Motor neuron (in vitro differentiated cells): ENCODE measurements at regions of chr11 and their contacts with region 1.

Region 1: GRCh38 chr11:36265793-36266628 is 23.2 kb downstream of the COMMD9 start:
- ATAC-seq: peak; percentile 71 to 93 (median 88)
- H3K4me3 ChIP-seq: no peak overlapping the region
- H3K27ac ChIP-seq: no peak overlapping the region
- H3K4me1 ChIP-seq: peaks cover 9 to 11% of the 10 kb centered on the region in 2 donors

Region 2: DNA sequence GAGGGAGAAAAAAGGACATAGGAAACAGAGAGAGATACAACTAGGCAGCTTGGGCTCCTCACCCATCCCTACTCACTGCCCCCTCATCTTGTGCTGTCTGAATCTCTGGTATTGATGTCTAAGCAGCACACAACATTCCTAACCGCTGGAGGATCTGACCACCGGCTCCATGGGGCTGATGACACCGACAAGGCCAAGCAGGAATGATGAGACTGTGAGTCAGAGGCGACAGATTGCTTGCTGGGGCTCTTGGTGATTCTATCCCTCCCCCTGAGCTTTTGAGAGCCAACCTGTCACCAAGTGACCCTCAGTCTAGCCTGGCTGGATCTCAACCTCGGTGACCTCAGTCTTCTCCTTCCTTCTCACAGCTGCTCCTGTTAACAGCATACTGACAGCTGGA is 754.3 kb before region 1 on chr11:
- in situ Hi-C with region 1: loop called in 1 of 9 experiments (anchors 25 kb)
- ATAC-seq: peak in 6 of 8 experiments; percentile 52 to 92 (median 92)
- H3K4me3 ChIP-seq: no peak overlapping the region
- H3K27ac ChIP-seq: no peak overlapping the region
- H3K4me1 ChIP-seq: peaks cover 17 to 21% of the 10 kb centered on the region in 2 donors

Region 3: GRCh38 chr11:35617687-35618496 is 648.1 kb before region 1 on chr11 and contains the start of gene FJX1:
- in situ Hi-C with region 1: loop called in 6 of 9 experiments (anchors 10 to 25 kb)
- ATAC-seq: peak; percentile 60 to 76 (median 70)
- H3K4me3 ChIP-seq: peak within 1 kb of the TSS; percentile 58 to 95 (median 91)
- H3K27ac ChIP-seq: peak within 1 kb of the TSS; percentile 86 to 97
- H3K4me1 ChIP-seq: peaks cover 19 to 24% of the 10 kb centered on the region in 2 donors
- total RNA-seq, gene FJX1: 5.9 to 254 (median 19.8) TPM

Region 4: DNA sequence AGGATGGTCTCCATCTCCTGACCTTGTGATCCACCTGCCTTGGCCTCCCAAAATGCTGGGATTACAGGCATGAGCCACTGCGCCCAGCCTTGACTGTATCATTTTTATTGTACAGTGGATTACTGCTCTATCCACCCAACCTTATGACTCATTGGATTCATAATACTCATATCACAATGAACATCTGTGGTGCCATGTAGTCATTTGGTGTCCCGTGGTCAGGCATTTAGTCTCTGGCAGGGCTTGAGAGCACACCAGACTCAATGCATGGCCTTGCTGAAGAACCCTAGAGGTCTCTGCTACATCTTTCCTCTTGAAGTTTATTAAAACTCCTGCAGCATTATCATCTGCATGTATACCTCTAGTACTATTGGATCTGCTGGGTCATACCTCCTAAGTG is 420.2 kb before region 1 on chr11:
- in situ Hi-C with region 1: loop called in 1 of 9 experiments (anchors 25 kb)
- ATAC-seq: no peak
- H3K4me3 ChIP-seq: no peak overlapping the region
- H3K27ac ChIP-seq: no peak overlapping the region
- H3K4me1 ChIP-seq: peaks cover 0 to 5% of the 10 kb centered on the region in 2 donors

Region 5: GRCh38 chr11:36056160-36056751 is 209.8 kb before region 1 on chr11:
- in situ Hi-C with region 1: loop called in 1 of 9 experiments (anchors 25 kb)
- ATAC-seq: peak in 3 of 8 experiments; percentile 36 to 68 (median 65)
- H3K4me3 ChIP-seq: no peak overlapping the region
- H3K27ac ChIP-seq: no peak overlapping the region
- H3K4me1 ChIP-seq: peaks cover 5 to 8% of the 10 kb centered on the region in 2 donors